Left ventricle myocardium inferior (tissue), 1 donor: ENCODE measurements at regions of chr7 and their contacts with region 1.

Region 1: GRCh38 chr7:7535691-7536090 is at the start of gene COL28A1:
- DNase-seq: no peak
- H3K4me3 ChIP-seq: peak within 1 kb of the TSS; percentile 12
- H3K27ac ChIP-seq: no peak within 1 kb of the TSS
- H3K4me1 ChIP-seq: no peaks in the 10 kb centered on the region
- H3K27me3 ChIP-seq: peaks cover 5% of the 10 kb centered on the region
- CTCF ChIP-seq: no peak
- total RNA-seq, gene COL28A1: 1.9 TPM

Region 2: GRCh38 chr7:7114706-7115295 is 420.9 kb before region 1 on chr7:
- intact Hi-C with region 1: loop called (anchors 10 kb)
- DNase-seq: no peak
- H3K4me3 ChIP-seq: no peak overlapping the region
- H3K27ac ChIP-seq: no peak overlapping the region
- H3K4me1 ChIP-seq: no peaks in the 10 kb centered on the region
- H3K27me3 ChIP-seq: no peaks in the 10 kb centered on the region
- CTCF ChIP-seq: no peak

Region 3: DNA sequence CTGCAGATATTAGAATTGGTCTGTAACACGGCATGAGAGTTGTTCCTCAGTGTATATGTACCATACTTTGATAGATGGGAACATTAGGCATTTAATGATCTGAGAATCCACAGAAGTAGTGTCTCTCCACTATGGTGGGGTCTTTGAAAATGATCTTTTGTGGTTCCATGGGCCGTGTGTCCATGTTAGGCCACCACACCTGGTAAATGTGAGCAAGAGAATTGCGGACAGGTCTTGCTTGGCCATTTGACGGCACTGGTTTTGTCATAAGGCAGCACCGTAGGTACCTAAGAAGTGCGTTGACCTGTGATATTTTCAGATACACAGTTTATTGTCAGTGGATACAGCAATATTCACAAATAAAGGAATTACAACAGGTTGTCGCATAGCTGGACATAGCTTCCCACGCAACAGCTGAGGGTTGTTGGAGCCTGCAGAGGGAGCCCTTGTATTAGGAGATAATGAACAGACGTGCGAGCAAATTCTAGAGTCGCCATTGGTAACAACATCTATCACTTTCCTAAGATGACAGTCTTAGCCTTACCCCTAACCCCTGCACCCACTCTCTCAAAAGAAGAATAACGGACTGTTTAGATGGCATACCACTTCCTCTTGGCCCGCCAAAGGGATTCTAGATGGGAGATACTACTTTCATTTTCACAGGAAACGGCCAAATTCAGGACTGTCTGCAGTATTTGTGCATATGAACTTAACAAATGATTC is 111.4 kb before region 1 on chr7:
- intact Hi-C with region 1: loop called (anchors 2 kb)
- DNase-seq: peak; percentile 35
- H3K4me3 ChIP-seq: peak overlapping the region; percentile 63
- H3K27ac ChIP-seq: peak overlapping the region; percentile 34
- H3K4me1 ChIP-seq: peaks cover 3% of the 10 kb centered on the region
- H3K27me3 ChIP-seq: no peaks in the 10 kb centered on the region
- CTCF ChIP-seq: peak; percentile 85

Region 4: GRCh38 chr7:7595451-7595850 is 59.8 kb after region 1 on chr7:
- intact Hi-C with region 1: no loop called
- DNase-seq: no peak
- H3K4me3 ChIP-seq: no peak overlapping the region
- H3K27ac ChIP-seq: no peak overlapping the region
- H3K4me1 ChIP-seq: no peaks in the 10 kb centered on the region
- H3K27me3 ChIP-seq: no peaks in the 10 kb centered on the region
- CTCF ChIP-seq: peak; percentile 52